Endothelial cell of umbilical vein (primary cell): ENCODE measurements at regions of chr14 and their contacts with region 1.

Region 1: DNA sequence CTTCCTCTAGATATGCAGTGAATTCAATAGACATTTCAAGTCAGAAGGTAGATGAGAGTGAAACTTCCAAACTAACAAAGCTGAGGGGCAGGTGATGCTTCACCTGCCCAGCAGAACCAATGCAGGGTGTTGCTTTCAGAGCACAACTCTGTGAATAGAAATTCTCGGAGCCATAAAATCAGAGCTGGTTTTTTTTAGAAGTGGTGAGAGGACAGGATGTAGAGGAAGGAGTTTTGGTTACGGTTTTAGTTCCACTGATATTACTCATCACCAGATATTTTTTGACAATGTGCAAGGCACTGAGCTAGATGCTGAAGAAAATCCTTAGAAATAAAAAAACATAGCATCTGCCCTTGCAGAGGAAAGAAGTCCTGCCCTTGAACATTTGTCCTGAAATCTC is 62.2 kb downstream of the BMP4 start:
- DNase-seq: peak; percentile 55
- H3K4me3 ChIP-seq: no peak overlapping the region
- H3K27ac ChIP-seq: peak overlapping the region; percentile 52
- H3K4me1 ChIP-seq: peaks cover 37% of the 10 kb centered on the region
- H3K27me3 ChIP-seq: no peaks in the 10 kb centered on the region
- CTCF ChIP-seq: no peak
- POLR2A ChIP-seq: no peak

Region 2: GRCh38 chr14:53539489-53540126 is 354.8 kb before region 1 on chr14:
- CTCF ChIA-PET with region 1: interaction called, 4 read pairs
- POLR2A ChIA-PET with region 1: no interaction called
- dilution Hi-C with region 1: no loop called
- intact Hi-C with region 1: loop called (anchors 1 kb)
- DNase-seq: peak; percentile 94
- H3K4me3 ChIP-seq: no peak overlapping the region
- H3K27ac ChIP-seq: no peak overlapping the region
- H3K4me1 ChIP-seq: peaks cover 43% of the 10 kb centered on the region
- H3K27me3 ChIP-seq: no peaks in the 10 kb centered on the region
- CTCF ChIP-seq: peak; percentile 74 to 82
- POLR2A ChIP-seq: no peak

Region 3: GRCh38 chr14:53715193-53715721 is 179.2 kb before region 1 on chr14:
- CTCF ChIA-PET with region 1: interaction called, 3 read pairs
- POLR2A ChIA-PET with region 1: no interaction called
- dilution Hi-C with region 1: no loop called
- intact Hi-C with region 1: loop called (anchors 2 kb)
- DNase-seq: peak; percentile 94
- H3K4me3 ChIP-seq: peak overlapping the region in 1 of 3 experiments; percentile 56
- H3K27ac ChIP-seq: peak overlapping the region; percentile 56
- H3K4me1 ChIP-seq: peaks cover 29% of the 10 kb centered on the region
- H3K27me3 ChIP-seq: no peaks in the 10 kb centered on the region
- CTCF ChIP-seq: no peak
- POLR2A ChIP-seq: peak; percentile 31

Region 4: GRCh38 chr14:53881161-53881871 is 13.1 kb before region 1 on chr14:
- CTCF ChIA-PET with region 1: interaction called, 4 read pairs
- POLR2A ChIA-PET with region 1: interaction called, 8 read pairs
- dilution Hi-C with region 1: no loop called
- intact Hi-C with region 1: loop called (anchors 1 kb)
- DNase-seq: peak; percentile 87
- H3K4me3 ChIP-seq: peak overlapping the region in 1 of 3 experiments; percentile 35
- H3K27ac ChIP-seq: peak overlapping the region; percentile 85
- H3K4me1 ChIP-seq: peaks cover 71% of the 10 kb centered on the region
- H3K27me3 ChIP-seq: no peaks in the 10 kb centered on the region
- CTCF ChIP-seq: no peak
- POLR2A ChIP-seq: peak; percentile 55

Region 5: DNA sequence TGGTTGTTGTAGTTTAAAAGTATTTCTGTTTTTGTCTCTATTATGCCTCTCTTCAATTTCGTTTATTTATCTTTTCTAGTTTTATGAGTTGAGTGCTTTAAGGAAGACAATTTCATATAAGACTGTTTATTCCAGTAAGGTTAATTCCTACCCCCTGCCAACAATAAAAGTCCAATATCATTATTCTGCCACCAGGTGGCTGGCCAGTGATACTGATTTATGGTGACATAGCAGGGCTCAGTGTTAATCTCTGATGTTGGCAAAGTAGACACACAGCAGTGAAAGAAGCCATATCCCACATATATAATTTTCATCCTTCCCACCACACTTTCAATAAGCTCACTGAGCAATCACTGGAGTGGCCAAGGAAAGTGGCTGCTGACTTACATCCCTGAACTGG is 131.2 kb after region 1 on chr14:
- CTCF ChIA-PET with region 1: no interaction called
- POLR2A ChIA-PET with region 1: no interaction called
- dilution Hi-C with region 1: no loop called
- intact Hi-C with region 1: loop called (anchors 5 kb)
- DNase-seq: peak; percentile 73
- H3K4me3 ChIP-seq: no peak overlapping the region
- H3K27ac ChIP-seq: no peak overlapping the region
- H3K4me1 ChIP-seq: no peaks in the 10 kb centered on the region
- H3K27me3 ChIP-seq: no peaks in the 10 kb centered on the region
- CTCF ChIP-seq: peak; percentile 27 to 46
- POLR2A ChIP-seq: no peak

Region 6: GRCh38 chr14:54211551-54212308 is 317.3 kb after region 1 on chr14:
- CTCF ChIA-PET with region 1: no interaction called
- POLR2A ChIA-PET with region 1: no interaction called
- dilution Hi-C with region 1: no loop called
- intact Hi-C with region 1: loop called (anchors 1 kb)
- DNase-seq: peak; percentile 86
- H3K4me3 ChIP-seq: no peak overlapping the region
- H3K27ac ChIP-seq: peak overlapping the region; percentile 91
- H3K4me1 ChIP-seq: peaks cover 25% of the 10 kb centered on the region
- H3K27me3 ChIP-seq: no peaks in the 10 kb centered on the region
- CTCF ChIP-seq: no peak
- POLR2A ChIP-seq: no peak